ENCODE measurements at regions of chr7 and their contacts with region 1.

Region 1: DNA sequence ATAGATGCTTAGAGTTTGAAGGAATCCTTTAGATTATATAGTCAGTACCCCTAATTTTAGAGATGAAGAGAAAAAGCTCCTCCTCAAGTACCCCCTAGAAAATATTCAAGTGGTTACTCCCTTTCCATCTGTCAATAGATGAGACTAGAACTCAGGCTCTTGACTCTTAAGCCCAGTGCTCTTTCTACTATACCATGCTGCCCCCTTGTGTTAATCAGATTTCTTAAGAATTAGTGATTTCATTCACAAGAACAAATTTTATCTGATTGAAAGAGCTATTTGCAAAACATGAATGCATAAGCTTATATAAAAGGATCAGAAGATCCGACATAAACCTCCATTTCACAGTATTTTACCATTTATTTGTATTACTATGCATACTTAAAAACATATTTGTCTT is 179.3 kb downstream of the TFEC start:
- H3K4me3 ChIP-seq: no peak overlapping the region
- H3K27ac ChIP-seq: no peak overlapping the region
- H3K4me1 ChIP-seq: no peaks in the 10 kb centered on the region
- CTCF ChIP-seq: no peak

Region 2: GRCh38 chr7:114081606-114082425 is 1769.5 kb before region 1 on chr7:
- CTCF ChIA-PET with region 1: interaction called, 10 read pairs
- POLR2A ChIA-PET with region 1: no interaction called
- H3K4me3 ChIP-seq: no peak overlapping the region
- H3K27ac ChIP-seq: no peak overlapping the region
- H3K4me1 ChIP-seq: no peaks in the 10 kb centered on the region
- CTCF ChIP-seq: no peak

Region 3: DNA sequence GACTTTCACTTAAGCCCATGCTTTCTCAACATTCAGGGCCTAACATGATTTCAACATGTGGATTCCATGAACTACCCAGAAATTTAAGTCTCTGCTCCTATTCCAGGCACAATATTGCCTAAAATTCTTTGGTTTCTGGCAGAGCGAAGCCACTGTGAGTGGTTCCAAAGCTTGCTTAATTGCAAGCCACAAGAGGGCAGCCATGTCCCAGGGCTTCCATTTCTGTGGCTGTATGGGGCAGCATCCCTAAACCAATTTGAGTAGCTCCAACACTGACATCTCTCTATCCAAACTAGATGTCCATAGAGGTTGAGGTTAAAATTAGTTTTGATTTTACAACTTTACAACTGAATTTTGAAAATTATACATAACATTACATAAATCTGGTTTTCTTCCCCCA is 985.7 kb before region 1 on chr7:
- CTCF ChIA-PET with region 1: interaction called, 11 read pairs
- POLR2A ChIA-PET with region 1: no interaction called
- H3K4me3 ChIP-seq: no peak overlapping the region
- H3K27ac ChIP-seq: no peak overlapping the region
- H3K4me1 ChIP-seq: no peaks in the 10 kb centered on the region
- CTCF ChIP-seq: peak; percentile 34; the same call in 1 of the 2 replicates

Region 4: GRCh38 chr7:115679976-115680375 is 171.3 kb before region 1 on chr7:
- CTCF ChIA-PET with region 1: interaction called, 10 read pairs
- POLR2A ChIA-PET with region 1: no interaction called
- H3K4me3 ChIP-seq: no peak overlapping the region
- H3K27ac ChIP-seq: no peak overlapping the region
- H3K4me1 ChIP-seq: no peaks in the 10 kb centered on the region
- CTCF ChIP-seq: no peak

Region 5: GRCh38 chr7:115838829-115839228 is 12.5 kb before region 1 on chr7:
- CTCF ChIA-PET with region 1: interaction called, 10 read pairs
- POLR2A ChIA-PET with region 1: no interaction called
- H3K4me3 ChIP-seq: no peak overlapping the region
- H3K27ac ChIP-seq: no peak overlapping the region
- H3K4me1 ChIP-seq: no peaks in the 10 kb centered on the region
- CTCF ChIP-seq: no peak

Region 6: DNA sequence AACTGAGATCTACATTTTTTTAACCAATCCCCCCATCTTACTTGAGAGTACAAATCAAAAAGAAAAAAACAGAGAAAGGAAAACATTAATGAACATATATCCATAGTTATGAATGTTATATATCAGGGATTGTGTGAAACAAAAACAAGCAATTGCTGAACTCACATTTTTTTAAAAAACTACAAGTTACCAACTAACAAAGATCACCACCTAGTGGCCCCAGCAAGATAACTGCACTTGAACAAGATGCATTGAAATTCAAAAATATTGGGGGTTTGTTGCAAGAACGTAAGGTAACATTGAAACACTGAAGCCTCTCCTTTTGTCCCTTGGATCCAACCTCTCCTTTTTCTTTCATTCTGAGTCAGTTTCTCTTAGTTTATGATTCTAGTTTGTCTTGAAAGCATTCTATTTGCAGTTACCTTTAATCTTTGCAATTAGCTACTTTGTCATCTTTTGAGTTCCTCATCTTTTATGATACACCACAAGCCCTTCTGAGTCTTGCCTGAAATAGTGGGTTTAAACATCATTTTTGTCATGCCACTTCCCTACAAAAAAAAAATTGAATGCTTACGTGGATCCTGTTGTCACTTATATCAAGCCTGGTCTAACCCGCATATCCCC is 271.8 kb after region 1 on chr7:
- CTCF ChIA-PET with region 1: interaction called, 10 read pairs
- POLR2A ChIA-PET with region 1: no interaction called
- H3K4me3 ChIP-seq: no peak overlapping the region
- H3K27ac ChIP-seq: no peak overlapping the region
- H3K4me1 ChIP-seq: no peaks in the 10 kb centered on the region
- CTCF ChIP-seq: peak; percentile 10; the same call in 1 of the 2 replicates